ENCODE measurements at regions of chr1 and their contacts with region 1.

Region 1: DNA sequence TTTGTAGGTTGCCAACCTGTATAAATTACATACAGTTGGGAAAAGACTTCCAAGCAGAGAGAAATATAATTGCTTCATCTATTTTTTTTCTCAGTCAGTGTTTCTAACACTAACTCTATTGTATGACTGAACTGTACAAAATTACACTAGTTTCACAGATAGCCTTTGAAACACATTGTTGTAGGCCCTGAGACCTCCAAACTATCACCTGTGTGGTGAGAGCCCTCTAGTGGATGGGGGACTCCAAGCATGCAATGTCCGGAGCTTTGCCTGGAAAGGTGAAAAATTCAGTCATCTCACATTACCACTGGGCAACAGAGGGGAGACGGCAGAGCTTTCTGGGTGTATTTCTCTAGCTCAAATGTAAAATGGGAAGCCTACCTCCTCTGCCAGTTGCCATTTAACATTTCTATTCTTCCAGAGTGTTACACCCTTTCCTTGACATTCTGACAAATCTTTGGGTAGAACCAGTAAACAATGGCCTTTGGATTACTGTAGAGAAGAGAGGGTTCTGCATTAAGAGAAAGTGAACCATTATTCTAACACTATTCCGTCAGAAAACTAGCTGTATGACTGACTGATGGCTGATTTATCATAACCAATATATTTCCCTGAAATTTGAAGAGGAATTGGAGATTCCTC is 212.2 kb downstream of the LYPLAL1 start:
- DNase-seq: peak; percentile 64 to 72
- H3K4me3 ChIP-seq: no peak overlapping the region
- H3K4me3 Mint-ChIP-seq: no peak overlapping the region
- H3K27ac Mint-ChIP-seq: no peak overlapping the region
- H3K4me1 ChIP-seq: peaks cover 41% of the 10 kb centered on the region
- H3K4me1 Mint-ChIP-seq: peaks cover 10% of the 10 kb centered on the region
- H3K27me3 ChIP-seq: no peaks in the 10 kb centered on the region
- H3K27me3 Mint-ChIP-seq: no peaks in the 10 kb centered on the region
- CTCF ChIP-seq: peak; percentile 69 to 80

Region 2: DNA sequence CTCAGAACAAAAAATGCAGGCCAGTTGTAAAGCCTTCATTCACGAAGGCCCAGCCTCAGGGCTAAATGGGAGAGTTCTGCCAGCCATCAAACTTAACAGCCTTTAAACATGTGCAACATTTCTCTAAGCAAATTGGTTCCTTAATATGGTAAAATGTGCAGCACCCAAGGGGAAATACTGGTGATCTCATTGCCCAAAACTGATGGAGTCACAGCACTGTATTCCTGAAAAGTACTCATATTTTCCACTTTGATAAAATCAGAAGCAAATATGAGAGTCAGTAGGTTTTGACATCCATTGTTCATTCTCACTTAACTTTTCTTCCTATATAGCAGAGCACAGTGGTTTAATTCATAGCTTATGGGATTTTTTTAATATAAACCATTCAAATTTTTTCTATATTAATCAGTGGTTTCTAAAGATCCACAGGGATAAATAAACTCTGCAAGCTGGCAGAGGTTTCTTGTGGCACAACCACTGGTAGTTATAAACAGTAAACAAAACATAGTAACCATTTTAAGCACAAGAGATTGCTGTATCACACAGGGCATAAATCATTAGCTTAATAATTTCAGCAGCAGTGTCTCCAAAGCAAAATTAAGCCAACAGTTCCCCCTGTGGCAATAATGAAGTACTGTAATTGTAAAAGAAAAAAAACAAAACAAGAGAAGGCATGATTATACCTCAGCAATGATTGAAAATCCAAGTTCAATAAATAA is 319.1 kb before region 1 on chr1:
- CTCF ChIA-PET with region 1: no interaction called
- POLR2A ChIA-PET with region 1: no interaction called
- intact Hi-C with region 1: loop called (anchors 5 kb)
- DNase-seq: no peak
- H3K4me3 ChIP-seq: no peak overlapping the region
- H3K4me3 Mint-ChIP-seq: no peak overlapping the region
- H3K27ac Mint-ChIP-seq: no peak overlapping the region
- H3K4me1 ChIP-seq: no peaks in the 10 kb centered on the region
- H3K4me1 Mint-ChIP-seq: no peaks in the 10 kb centered on the region
- H3K27me3 ChIP-seq: no peaks in the 10 kb centered on the region
- H3K27me3 Mint-ChIP-seq: no peaks in the 10 kb centered on the region
- CTCF ChIP-seq: peak; percentile 30 to 38

Region 3: DNA sequence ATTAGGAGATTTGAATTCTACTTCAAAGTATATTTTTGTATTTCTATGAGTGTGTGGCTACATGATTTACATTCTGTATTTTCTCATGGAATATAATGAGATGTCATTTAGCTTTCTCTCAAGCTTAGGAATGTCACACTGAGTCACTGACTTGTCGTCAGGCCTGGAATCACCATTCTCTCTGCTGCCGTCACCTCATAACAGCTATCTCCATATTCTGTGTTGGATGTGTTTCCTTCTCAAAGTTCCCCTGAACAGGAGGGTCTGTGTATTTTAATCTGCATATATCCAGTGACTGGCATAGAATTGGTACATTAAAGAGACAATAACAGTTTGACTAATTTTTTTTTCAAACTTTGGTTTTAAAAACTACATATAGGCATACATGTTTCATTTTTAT is 176.3 kb before region 1 on chr1:
- CTCF ChIA-PET with region 1: no interaction called
- POLR2A ChIA-PET with region 1: no interaction called
- intact Hi-C with region 1: loop called (anchors 1 kb)
- DNase-seq: no peak
- H3K4me3 ChIP-seq: no peak overlapping the region
- H3K4me3 Mint-ChIP-seq: no peak overlapping the region
- H3K27ac Mint-ChIP-seq: no peak overlapping the region
- H3K4me1 ChIP-seq: no peaks in the 10 kb centered on the region
- H3K4me1 Mint-ChIP-seq: peaks cover 7% of the 10 kb centered on the region
- H3K27me3 ChIP-seq: no peaks in the 10 kb centered on the region
- H3K27me3 Mint-ChIP-seq: no peaks in the 10 kb centered on the region
- CTCF ChIP-seq: no peak

Region 4: GRCh38 chr1:219416594-219417238 is 30.8 kb after region 1 on chr1:
- CTCF ChIA-PET with region 1: no interaction called
- POLR2A ChIA-PET with region 1: no interaction called
- intact Hi-C with region 1: loop called (anchors 2 kb)
- DNase-seq: peak; percentile 64 to 73
- H3K4me3 ChIP-seq: no peak overlapping the region
- H3K4me3 Mint-ChIP-seq: no peak overlapping the region
- H3K27ac Mint-ChIP-seq: no peak overlapping the region
- H3K4me1 ChIP-seq: peaks cover 4% of the 10 kb centered on the region; the same call in 1 of the 2 replicates
- H3K4me1 Mint-ChIP-seq: no peaks in the 10 kb centered on the region
- H3K27me3 ChIP-seq: no peaks in the 10 kb centered on the region
- H3K27me3 Mint-ChIP-seq: no peaks in the 10 kb centered on the region
- CTCF ChIP-seq: peak; percentile 67 to 69

Region 5: GRCh38 chr1:219812491-219813203 is 426.7 kb after region 1 on chr1:
- CTCF ChIA-PET with region 1: no interaction called
- POLR2A ChIA-PET with region 1: no interaction called
- intact Hi-C with region 1: loop called (anchors 2 kb)
- DNase-seq: peak; percentile 63 to 69
- H3K4me3 ChIP-seq: no peak overlapping the region
- H3K4me3 Mint-ChIP-seq: no peak overlapping the region
- H3K27ac Mint-ChIP-seq: no peak overlapping the region
- H3K4me1 ChIP-seq: no peaks in the 10 kb centered on the region
- H3K4me1 Mint-ChIP-seq: no peaks in the 10 kb centered on the region
- H3K27me3 ChIP-seq: no peaks in the 10 kb centered on the region
- H3K27me3 Mint-ChIP-seq: peaks cover 20% of the 10 kb centered on the region
- CTCF ChIP-seq: peak; percentile 88 to 96

Measured in Caco-2 (cell line).